WTC11 (cell line): ENCODE measurements at regions of chr17 and their contacts with region 1.

Region 1: GRCh38 chr17:42221937-42222745 is 27.8 kb upstream of the GHDC start:
- DNase-seq: peak; percentile 61
- ATAC-seq: peak; percentile 93
- H3K4me3 Mint-ChIP-seq: no peak overlapping the region
- H3K27ac Mint-ChIP-seq: no peak overlapping the region
- H3K4me1 Mint-ChIP-seq: no peaks in the 10 kb centered on the region
- H3K27me3 Mint-ChIP-seq: no peaks in the 10 kb centered on the region
- CTCF ChIP-seq: peak; percentile 59; the same call in 1 of the 2 replicates

Region 2: GRCh38 chr17:41937970-41938954 is 283.9 kb before region 1 on chr17:
- CTCF ChIA-PET with region 1: no interaction called
- POLR2A ChIA-PET with region 1: no interaction called
- DNase-seq: no peak
- ATAC-seq: no peak
- H3K4me3 Mint-ChIP-seq: no peak overlapping the region
- H3K27ac Mint-ChIP-seq: 0 out of 2 replicates have a peak overlapping the region, but pooled peaks have one; percentile 54
- H3K4me1 Mint-ChIP-seq: no peaks in the 10 kb centered on the region
- H3K27me3 Mint-ChIP-seq: no peaks in the 10 kb centered on the region
- CTCF ChIP-seq: no peak

Region 3: DNA sequence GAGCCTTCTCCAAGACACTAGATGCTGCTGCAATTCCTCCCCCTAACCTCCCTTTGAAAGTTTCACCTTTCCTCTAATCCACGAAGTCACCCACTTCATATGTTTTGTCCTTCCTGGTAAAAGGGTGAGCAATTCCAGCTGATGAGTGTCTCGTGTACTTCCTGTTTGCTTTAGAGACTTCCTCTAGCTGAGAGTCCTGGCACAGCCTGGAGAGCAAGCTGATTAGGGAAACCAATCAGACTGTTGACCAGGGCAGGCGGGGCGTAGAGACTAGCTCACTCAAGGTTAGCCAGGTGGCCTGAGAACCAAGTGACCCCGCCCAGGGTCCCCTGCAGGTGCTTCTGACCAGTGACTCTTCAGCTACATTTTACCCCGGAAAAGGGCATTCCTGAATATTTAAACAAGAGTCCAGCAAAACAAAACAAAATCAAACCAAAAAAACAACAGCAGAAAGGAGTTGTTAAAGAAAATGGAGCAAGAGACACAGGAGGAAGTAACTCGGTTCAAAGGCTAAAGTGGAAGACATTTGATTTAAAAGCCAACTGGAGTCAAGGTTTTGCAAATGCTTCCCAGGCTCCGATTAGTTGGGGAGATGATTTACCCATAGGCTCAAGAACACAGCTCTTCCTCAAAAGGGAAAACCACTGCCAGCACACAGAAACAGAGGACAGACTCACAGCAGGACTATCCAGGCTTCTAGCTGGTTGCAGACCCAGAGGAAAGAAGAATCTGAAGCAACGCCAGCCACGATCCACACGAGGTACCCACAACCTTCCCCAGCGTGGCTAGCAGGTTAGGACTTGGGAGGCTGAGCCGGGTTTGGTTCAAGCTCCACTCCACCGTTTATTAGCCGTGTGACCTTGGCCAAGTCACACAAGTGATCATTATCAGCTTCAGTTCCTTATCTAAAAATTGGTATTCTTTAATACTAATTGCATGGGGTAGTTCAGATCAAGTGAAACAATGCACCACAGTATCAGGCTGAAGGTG is 86.2 kb before region 1 on chr17:
- CTCF ChIA-PET with region 1: interaction called, 11 read pairs
- POLR2A ChIA-PET with region 1: no interaction called
- DNase-seq: peak; percentile 69
- ATAC-seq: peak; percentile 92
- H3K4me3 Mint-ChIP-seq: peak overlapping the region; percentile 15; the same call in 1 of the 2 replicates
- H3K27ac Mint-ChIP-seq: peak overlapping the region; percentile 97
- H3K4me1 Mint-ChIP-seq: peaks cover 42% of the 10 kb centered on the region
- H3K27me3 Mint-ChIP-seq: no peaks in the 10 kb centered on the region
- CTCF ChIP-seq: no peak

Region 4: GRCh38 chr17:42200702-42201101 is 21.4 kb before region 1 on chr17:
- CTCF ChIA-PET with region 1: interaction called, 29 read pairs
- POLR2A ChIA-PET with region 1: interaction called, 3 read pairs
- DNase-seq: no peak
- ATAC-seq: no peak
- H3K4me3 Mint-ChIP-seq: no peak overlapping the region
- H3K27ac Mint-ChIP-seq: no peak overlapping the region
- H3K4me1 Mint-ChIP-seq: 0 out of 2 replicates have a peak, but pooled peaks cover 3% of the 10 kb centered on the region
- H3K27me3 Mint-ChIP-seq: no peaks in the 10 kb centered on the region
- CTCF ChIP-seq: no peak

Region 5: DNA sequence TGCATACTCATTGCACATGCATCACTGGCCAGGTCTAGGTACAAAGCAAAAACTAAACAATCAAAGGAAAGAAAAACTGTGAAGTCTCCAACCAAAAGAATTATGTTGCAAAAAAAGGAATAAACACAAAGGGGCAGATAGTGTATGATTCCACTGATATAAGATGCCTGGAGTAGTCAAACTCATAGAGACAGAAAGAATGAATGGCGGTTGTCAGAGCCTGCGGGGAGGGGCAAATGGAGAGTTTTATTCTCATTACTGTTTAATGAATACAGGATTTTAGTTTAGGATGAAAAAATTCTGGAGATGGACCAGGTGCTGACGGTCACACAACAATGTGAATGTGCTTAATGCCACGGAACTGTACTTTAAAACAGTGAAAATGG is 33.3 kb after region 1 on chr17:
- CTCF ChIA-PET with region 1: interaction called, 38 read pairs
- POLR2A ChIA-PET with region 1: no interaction called
- DNase-seq: no peak
- ATAC-seq: no peak
- H3K4me3 Mint-ChIP-seq: no peak overlapping the region
- H3K27ac Mint-ChIP-seq: no peak overlapping the region; the same call in 1 of the 2 replicates
- H3K4me1 Mint-ChIP-seq: peaks cover 29% of the 10 kb centered on the region
- H3K27me3 Mint-ChIP-seq: no peaks in the 10 kb centered on the region
- CTCF ChIP-seq: no peak

Region 6: GRCh38 chr17:42312285-42313130 is 90.4 kb after region 1 on chr17:
- CTCF ChIA-PET with region 1: interaction called, 69 read pairs
- POLR2A ChIA-PET with region 1: no interaction called
- DNase-seq: peak; percentile 93
- ATAC-seq: peak; percentile 86
- H3K4me3 Mint-ChIP-seq: peak overlapping the region; percentile 38; the same call in 1 of the 2 replicates
- H3K27ac Mint-ChIP-seq: no peak overlapping the region
- H3K4me1 Mint-ChIP-seq: peaks cover 33% of the 10 kb centered on the region
- H3K27me3 Mint-ChIP-seq: no peaks in the 10 kb centered on the region
- CTCF ChIP-seq: no peak

Region 7: GRCh38 chr17:42342242-42343008 is 120.3 kb after region 1 on chr17:
- CTCF ChIA-PET with region 1: no interaction called
- POLR2A ChIA-PET with region 1: no interaction called
- DNase-seq: no peak
- ATAC-seq: no peak
- H3K4me3 Mint-ChIP-seq: no peak overlapping the region
- H3K27ac Mint-ChIP-seq: peak overlapping the region; percentile 67; the same call in 1 of the 2 replicates
- H3K4me1 Mint-ChIP-seq: peaks cover 17% of the 10 kb centered on the region
- H3K27me3 Mint-ChIP-seq: no peaks in the 10 kb centered on the region
- CTCF ChIP-seq: no peak

Region 8: DNA sequence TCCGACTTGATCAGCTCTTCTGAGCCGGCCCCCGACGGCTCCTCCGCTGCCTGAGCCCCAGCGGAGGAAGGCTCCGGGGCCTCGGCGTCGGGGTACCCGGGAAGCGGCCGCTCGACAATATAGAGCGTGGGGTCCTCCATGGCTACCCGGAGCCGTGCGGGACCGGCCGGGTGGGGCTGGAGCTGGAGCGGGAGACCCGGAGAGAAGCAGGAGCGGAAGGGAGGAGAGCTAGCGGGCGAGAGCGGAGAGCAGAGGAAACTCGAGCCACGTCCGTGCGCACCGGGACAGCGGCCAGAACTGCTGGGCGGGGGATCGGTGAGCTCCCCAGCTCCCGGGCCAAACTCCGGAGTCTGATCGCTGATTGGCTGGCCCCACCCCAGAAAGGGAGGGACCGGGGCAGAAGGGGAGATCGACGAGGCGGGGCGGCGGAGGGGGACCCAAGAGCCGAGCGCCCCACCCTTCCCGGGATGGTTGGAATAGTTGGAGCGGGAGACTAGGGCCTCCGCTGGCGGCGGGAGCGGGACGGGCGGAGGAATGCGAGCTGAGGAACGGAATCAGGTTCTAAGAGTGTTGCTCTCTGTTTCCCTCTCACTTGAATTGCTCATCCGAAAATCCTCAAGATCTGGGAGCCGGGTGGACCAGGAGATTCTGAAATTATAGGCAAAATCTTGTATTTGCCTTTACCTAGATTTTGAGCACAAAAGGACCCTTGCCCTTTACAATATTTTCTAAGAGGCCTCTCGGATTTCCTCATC is 201.0 kb after region 1 on chr17 and contains the start of gene CAVIN1:
- CTCF ChIA-PET with region 1: interaction called, 15 read pairs
- POLR2A ChIA-PET with region 1: interaction called, 4 read pairs
- DNase-seq: peak; percentile 97
- ATAC-seq: peak; percentile 86
- H3K4me3 Mint-ChIP-seq: peak within 1 kb of the TSS; percentile 95
- H3K27ac Mint-ChIP-seq: peak within 1 kb of the TSS; percentile 93
- H3K4me1 Mint-ChIP-seq: peaks cover 31% of the 10 kb centered on the region
- H3K27me3 Mint-ChIP-seq: peaks cover 57% of the 10 kb centered on the region
- CTCF ChIP-seq: no peak
- total RNA-seq, gene CAVIN1: 24.6 to 28.4 TPM (median 27.8 TPM) in 3 replicates

Region 9: GRCh38 chr17:43868226-43868994 is 1646.3 kb after region 1 on chr17:
- CTCF ChIA-PET with region 1: no interaction called
- POLR2A ChIA-PET with region 1: no interaction called
- DNase-seq: no peak
- ATAC-seq: no peak
- H3K4me3 Mint-ChIP-seq: no peak overlapping the region
- H3K27ac Mint-ChIP-seq: no peak overlapping the region
- H3K4me1 Mint-ChIP-seq: peaks cover 9% of the 10 kb centered on the region
- H3K27me3 Mint-ChIP-seq: peaks cover 16% of the 10 kb centered on the region
- CTCF ChIP-seq: no peak